ENCODE measurements at regions of chr19 and their contacts with region 1.

Region 1: GRCh38 chr19:13132471-13133180 is 14.6 kb downstream of the NACC1 start:
- DNase-seq: peak; percentile 81
- ATAC-seq: peak; percentile 98
- H3K4me3 Mint-ChIP-seq: peak overlapping the region; percentile 43
- H3K27ac Mint-ChIP-seq: peak overlapping the region; percentile 93
- H3K4me1 Mint-ChIP-seq: peaks cover 41% of the 10 kb centered on the region
- H3K27me3 Mint-ChIP-seq: no peaks in the 10 kb centered on the region

Region 2: DNA sequence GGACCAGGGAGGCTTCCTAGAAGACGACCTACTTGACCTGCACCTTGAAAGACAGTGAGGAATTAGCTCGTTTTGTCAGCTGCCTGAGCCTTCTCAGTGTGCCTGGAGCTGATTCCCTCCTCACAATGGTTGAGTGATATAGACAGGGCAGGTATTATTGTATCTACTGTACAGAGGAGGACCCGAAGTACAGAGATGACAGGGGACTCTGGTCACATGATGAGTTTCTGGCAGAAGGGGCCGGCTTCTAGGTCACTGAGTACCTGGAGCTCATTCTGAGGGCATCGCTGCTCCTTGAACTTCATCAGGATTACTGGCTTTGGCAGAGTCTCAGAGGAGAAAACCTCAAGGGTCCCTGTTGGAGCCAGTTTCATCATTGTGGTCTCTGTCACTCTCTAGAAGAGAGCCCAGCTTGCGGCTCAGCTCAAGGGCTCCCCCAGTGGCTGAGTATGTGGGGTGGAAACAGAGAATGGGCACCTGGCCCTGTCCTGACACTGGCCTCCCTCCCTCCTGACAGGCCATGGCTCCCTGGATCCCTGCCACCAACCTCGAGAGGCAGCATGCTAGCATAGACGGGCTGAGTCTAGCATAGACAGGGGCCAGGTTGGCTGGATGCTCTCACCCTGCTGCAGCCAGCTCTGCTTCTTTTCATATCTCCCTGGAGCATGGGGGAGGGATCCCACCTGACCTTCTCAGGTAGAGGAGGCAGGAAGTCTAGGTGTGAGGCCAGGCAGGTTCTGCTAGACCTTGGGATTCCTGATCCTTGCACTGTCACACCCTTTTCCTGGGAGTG is 98.6 kb before region 1 on chr19:
- CTCF ChIA-PET with region 1: no interaction called
- POLR2A ChIA-PET with region 1: no interaction called
- intact Hi-C with region 1: no loop called
- DNase-seq: peak; percentile 74
- ATAC-seq: peak; percentile 86
- H3K4me3 Mint-ChIP-seq: no peak overlapping the region
- H3K27ac Mint-ChIP-seq: no peak overlapping the region
- H3K4me1 Mint-ChIP-seq: peaks cover 2% of the 10 kb centered on the region
- H3K27me3 Mint-ChIP-seq: no peaks in the 10 kb centered on the region

Region 3: DNA sequence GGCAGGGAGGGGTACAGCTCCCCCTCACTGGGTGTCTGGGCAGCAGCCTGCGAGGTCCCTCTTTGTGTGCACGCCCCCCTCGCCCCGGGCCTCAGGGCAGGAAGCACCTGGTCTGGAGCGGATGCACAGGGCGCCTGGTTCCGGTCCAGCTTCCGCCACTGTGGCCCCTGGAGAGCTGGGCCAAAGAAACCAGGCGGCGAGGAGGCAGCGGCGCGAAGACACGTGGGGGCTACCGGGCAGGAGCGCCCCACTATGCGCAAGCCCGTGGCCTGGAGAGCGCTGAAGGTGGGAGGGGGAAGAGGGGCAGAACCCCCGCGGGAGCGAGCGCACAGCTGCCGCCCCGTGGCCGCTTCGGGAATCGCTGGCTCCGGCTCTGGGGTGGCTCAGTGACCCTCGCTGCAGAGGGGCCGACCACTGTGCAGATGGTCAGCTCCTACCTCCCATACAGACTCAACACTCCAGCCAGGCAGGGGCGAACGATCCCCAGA is 28.2 kb before region 1 on chr19:
- CTCF ChIA-PET with region 1: interaction called, 10 read pairs
- POLR2A ChIA-PET with region 1: interaction called, 4 read pairs
- intact Hi-C with region 1: loop called in 1 of 2 experiments (anchors 2 kb)
- DNase-seq: peak; percentile 84
- ATAC-seq: peak; percentile 48
- H3K4me3 Mint-ChIP-seq: peak overlapping the region; percentile 78
- H3K27ac Mint-ChIP-seq: peak overlapping the region; percentile 90
- H3K4me1 Mint-ChIP-seq: peaks cover 34% of the 10 kb centered on the region
- H3K27me3 Mint-ChIP-seq: no peaks in the 10 kb centered on the region

Region 4: DNA sequence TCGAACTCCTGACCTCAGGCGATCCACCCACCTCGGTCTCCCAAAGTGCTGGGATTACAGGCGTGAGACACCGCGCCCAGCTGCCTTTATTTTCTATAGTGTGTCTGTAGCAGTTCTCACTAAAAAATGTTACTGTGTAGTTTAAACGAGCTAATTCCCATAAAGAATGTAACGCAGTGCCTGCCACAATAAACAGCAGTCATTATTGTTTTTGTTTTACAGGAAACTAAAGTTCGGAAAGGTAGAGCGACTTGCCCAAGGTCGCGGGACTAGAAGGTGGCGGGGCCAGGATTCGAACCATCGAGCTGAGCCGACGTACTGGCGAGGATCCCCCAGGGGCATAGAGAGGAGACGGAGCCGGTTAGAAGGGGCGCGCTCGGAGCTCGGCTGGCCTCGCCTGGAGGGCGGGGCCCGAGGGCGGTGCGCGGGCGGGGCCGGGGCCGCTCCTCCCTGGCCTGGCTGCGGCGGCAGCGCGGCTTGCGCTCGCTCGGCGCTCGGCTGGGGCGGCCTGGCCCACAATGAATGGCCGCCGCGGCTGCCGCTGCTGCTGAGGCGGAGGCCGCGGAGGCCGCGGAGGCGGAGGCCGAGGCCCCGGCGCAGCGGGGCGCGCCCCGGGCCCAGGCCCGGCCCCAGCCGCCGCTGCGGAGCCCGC is 14.7 kb before region 1 on chr19 and contains the start of gene NACC1:
- CTCF ChIA-PET with region 1: interaction called, 5 read pairs
- POLR2A ChIA-PET with region 1: interaction called, 4 read pairs
- intact Hi-C with region 1: loop called (anchors 1 kb)
- DNase-seq: peak; percentile 95
- ATAC-seq: peak; percentile 85
- H3K4me3 Mint-ChIP-seq: peak within 1 kb of the TSS; percentile 87
- H3K27ac Mint-ChIP-seq: peak within 1 kb of the TSS; percentile 95
- H3K4me1 Mint-ChIP-seq: peaks cover 49% of the 10 kb centered on the region
- H3K27me3 Mint-ChIP-seq: no peaks in the 10 kb centered on the region
- total RNA-seq, gene NACC1: 77.5 to 84.5 TPM

Region 5: DNA sequence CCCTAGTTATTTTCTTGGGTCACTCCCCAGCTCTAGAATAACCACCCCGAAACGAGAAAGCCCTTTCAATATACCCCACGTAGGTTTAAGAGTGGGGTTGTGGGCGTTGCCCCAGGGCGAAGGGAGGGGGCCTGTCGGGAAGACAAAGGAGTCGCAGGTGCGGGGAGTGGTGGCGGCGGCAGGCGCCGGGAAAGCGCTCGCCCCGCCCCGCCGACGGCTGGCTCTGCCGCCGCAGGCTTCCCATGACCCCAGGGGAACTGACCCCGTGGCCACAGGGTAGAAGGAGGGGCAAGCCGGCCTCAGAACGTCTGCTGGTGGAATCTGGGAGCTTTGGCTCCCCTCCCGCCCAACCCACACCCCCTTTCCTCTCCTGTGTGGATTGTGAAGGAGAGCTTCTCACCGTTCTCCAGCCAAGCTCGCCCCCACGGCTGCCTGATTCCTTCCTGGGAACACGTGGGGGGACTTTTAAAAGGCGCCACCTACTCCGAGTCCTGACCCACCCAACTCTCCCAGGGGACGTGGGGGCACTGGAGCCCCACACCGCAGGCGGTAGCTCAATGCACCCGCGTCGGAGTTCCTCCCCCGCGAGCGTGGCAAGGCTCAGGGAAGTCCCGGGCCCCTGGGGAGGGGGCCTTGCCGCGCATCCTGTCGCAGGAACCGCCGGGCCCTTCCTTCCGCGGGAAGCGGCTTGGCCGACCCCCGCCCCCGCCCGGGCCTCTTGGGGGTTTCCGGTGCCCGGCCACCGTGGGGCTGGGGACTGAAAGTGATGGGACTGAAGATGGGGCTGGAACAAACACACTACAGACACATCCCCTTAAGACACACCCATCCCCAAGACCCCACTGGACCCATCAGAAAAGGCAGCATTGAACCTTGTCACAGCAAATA is 23.1 kb after region 1 on chr19:
- CTCF ChIA-PET with region 1: interaction called, 5 read pairs
- POLR2A ChIA-PET with region 1: interaction called, 10 read pairs
- intact Hi-C with region 1: loop called (anchors 1 kb)
- DNase-seq: peak; percentile 82
- ATAC-seq: peak; percentile 1
- H3K4me3 Mint-ChIP-seq: peak overlapping the region; percentile 87
- H3K27ac Mint-ChIP-seq: peak overlapping the region; percentile 100
- H3K4me1 Mint-ChIP-seq: peaks cover 33% of the 10 kb centered on the region
- H3K27me3 Mint-ChIP-seq: no peaks in the 10 kb centered on the region

Region 6: DNA sequence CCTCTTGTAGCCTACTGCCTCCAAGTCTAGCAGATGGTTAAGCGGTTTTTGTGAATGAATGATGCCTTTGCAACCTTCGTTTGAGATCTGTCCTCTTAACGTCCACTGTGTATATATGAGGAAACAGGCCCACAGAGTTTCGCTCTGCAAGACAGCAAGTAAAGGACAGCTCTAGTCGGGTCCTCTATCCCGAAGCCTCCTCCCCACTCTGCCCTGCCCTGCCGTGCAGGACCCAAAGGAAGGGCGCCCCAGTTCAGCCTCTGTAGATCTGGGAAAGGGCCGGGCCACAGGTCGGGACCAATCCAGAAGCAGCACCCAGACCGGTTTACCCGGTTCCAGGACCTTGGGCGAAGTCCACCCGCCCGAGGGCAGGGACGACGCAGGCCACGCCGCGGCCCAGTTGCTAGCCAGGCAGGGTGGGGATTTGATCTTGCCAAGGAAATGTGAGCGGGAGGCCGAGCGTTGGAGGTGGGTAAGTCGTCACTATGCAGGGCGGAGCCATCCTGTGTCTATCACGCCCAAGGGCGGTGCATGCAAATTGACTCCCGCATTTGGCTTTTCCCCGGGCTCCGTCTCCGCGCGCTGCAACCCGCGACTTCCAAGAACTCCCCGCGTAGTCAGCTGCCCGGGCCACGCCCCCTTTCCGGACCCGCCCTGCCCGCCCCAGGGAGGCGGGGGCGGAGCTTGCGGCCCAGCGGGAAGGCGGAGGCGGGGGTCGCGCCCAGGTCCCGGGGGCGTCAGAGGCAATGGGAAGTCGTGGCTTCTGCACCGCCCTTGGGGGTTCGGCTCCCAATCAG is 30.1 kb after region 1 on chr19:
- CTCF ChIA-PET with region 1: interaction called, 3 read pairs
- POLR2A ChIA-PET with region 1: no interaction called
- intact Hi-C with region 1: loop called in 1 of 2 experiments (anchors 1 kb)
- DNase-seq: peak; percentile 96
- ATAC-seq: peak; percentile 56
- H3K4me3 Mint-ChIP-seq: peak overlapping the region; percentile 80
- H3K27ac Mint-ChIP-seq: peak overlapping the region; percentile 94
- H3K4me1 Mint-ChIP-seq: peaks cover 64% of the 10 kb centered on the region
- H3K27me3 Mint-ChIP-seq: no peaks in the 10 kb centered on the region

Region 7: DNA sequence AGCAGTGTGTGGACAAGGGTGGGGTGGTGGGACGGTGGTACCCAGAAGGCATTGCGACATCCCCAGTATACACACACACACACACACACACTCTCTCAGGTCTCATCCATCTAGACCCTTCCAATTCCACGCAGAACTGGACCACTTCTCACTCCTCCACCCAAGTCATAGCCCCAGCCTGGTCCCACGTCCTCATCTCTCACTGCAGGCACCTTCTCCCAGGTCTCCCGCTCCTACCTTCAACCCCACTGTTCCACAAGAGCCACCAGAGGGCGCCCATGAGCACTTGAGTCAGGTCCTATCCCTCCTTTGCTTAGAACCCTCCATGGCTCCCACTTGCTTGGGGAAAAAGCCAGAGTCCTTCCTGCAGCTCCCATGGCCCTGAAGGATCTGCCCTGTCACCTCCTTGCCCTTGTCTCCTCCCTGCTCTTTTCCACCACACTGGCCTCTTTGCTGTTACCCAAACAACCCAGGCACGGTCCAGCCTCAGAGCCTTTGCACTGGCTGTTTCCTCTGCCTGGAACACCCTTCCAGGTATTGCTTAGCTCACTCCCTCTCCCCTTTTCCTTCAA is 80.2 kb after region 1 on chr19:
- CTCF ChIA-PET with region 1: no interaction called
- POLR2A ChIA-PET with region 1: no interaction called
- intact Hi-C with region 1: loop called in 1 of 2 experiments (anchors 1 kb)
- DNase-seq: peak; percentile 90
- ATAC-seq: peak; percentile 51
- H3K4me3 Mint-ChIP-seq: no peak overlapping the region
- H3K27ac Mint-ChIP-seq: no peak overlapping the region
- H3K4me1 Mint-ChIP-seq: peaks cover 32% of the 10 kb centered on the region
- H3K27me3 Mint-ChIP-seq: no peaks in the 10 kb centered on the region

Measured in activated CD4-positive, alpha-beta T cell treated with anti-CD3 and anti-CD28 coated beads for 36 hours (primary cell).